Thyroid gland (tissue), 4 donors: ENCODE measurements at regions of chr4 and their contacts with region 1.

Region 1: GRCh38 chr4:83267121-83267829 is 17.3 kb downstream of the COQ2 start:
- DNase-seq: peak; percentile 11 to 28
- H3K4me3 ChIP-seq: no peak overlapping the region
- H3K27ac ChIP-seq: peak overlapping the region in 1 of 3 donors; percentile 19
- H3K4me1 ChIP-seq: peaks cover 5 to 6% of the 10 kb centered on the region in 2 donors
- H3K27me3 ChIP-seq: no peaks in the 10 kb centered on the region
- CTCF ChIP-seq: no peak
- POLR2A ChIP-seq: no peak

Region 2: DNA sequence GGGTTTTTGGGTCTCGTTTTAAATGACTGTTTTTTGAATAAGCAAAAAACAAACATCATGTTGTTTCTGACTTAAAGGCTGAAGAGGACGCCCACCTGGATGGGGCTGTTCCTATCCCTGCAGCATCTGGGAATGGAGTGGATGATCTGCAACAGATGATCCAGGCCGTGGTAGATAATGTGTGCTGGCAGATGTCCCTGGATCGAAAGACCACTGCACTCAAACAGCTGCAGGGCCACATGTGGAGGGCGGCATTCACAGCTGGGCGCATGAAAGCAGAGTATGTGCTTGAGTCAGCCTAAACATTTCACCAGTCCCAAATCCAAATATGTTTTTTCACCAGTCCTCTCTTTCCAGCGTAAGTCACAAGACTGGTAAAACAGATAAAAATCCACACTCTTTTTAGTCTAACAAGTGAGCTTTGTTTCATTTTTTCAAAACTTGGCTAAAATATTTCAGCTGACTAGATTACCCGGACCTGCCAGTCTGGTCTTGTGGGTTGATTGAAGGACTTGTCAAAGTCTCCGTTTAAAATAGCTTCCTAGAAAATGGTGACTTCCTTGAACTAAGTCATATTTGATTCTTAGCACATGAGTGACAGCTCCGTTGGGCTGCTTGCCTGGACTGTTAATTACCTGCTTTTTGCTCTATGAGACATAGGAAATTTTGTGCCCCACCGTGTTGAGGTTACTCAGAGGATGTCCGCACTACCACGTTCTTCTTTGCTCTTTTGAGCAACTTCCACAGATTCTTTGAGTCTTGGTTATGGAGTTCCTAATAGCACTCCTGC is 816.1 kb before region 1 on chr4:
- intact Hi-C with region 1: loop called (anchors 10 kb)
- DNase-seq: no peak
- H3K4me3 ChIP-seq: no peak overlapping the region
- H3K27ac ChIP-seq: no peak overlapping the region
- H3K4me1 ChIP-seq: no peaks in the 10 kb centered on the region
- H3K27me3 ChIP-seq: no peaks in the 10 kb centered on the region
- CTCF ChIP-seq: no peak
- POLR2A ChIP-seq: no peak

Region 3: DNA sequence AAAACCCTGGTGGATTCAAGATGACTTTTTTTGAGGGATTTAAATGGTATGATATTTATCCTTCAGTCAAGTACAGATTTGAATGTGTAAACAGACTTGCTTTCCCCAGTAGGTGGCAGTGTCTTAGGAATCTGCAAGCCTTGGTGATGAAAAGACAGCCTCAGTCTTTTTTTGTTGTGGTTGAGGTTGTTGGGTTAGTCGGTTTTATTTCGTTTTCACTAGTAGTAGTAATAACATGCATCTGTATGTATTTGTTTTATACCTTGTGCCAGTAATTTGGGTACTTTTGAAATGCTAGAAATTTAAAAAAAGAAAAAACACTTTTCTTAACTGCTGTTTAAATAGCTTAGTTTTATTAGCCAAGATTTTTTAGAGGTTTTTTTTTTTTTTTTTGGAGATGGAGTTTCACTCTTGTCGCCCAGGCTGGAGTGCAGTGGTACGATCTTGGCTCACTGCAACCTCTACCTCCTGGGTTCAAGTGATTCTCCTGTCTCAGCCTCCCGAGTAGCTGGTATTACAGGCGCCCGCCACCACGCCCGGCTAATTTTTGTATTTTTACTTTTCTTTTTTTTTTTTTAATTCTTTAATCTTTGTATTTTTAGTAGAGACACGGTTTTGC is 193.1 kb before region 1 on chr4:
- intact Hi-C with region 1: loop called (anchors 10 kb)
- DNase-seq: peak in 1 of 2 donors; percentile 10
- H3K4me3 ChIP-seq: no peak overlapping the region
- H3K27ac ChIP-seq: no peak overlapping the region
- H3K4me1 ChIP-seq: no peaks in the 10 kb centered on the region
- H3K27me3 ChIP-seq: no peaks in the 10 kb centered on the region
- CTCF ChIP-seq: peak in 5 of 6 experiments; percentile 49 to 68 (median 59)
- POLR2A ChIP-seq: no peak